Dendritic cell treated with granulocyte-macrophage colony-stimulating factor and Interleukin-4, amounts not matched to agents 40 ng/mL and 50 ng/mL, for 4 days (primary cell): ENCODE measurements at regions of chr16 and their contacts with region 1.

Region 1: DNA sequence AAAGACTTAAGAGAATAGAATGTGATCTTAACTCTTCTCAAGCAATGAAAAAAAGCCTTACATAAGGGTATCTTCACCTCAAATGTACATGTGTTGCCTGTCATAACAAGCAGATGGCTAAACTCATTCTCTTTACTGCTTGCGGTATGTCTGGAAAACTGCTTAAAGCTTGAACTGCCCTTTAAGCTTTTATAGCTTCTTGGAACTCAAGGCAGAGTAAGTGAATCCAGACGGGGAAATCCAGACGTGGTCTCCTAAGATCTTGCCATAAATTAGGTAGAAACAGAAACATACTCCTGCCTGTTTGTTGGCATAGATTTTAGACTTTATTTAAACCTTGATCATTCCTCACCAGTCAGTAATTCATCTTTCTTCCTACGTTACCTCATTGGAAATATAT is 19.6 kb downstream of the CLUAP1 start:
- H3K4me3 Mint-ChIP-seq: no peak overlapping the region
- H3K27ac Mint-ChIP-seq: no peak overlapping the region
- H3K4me1 Mint-ChIP-seq: peaks cover 10% of the 10 kb centered on the region
- H3K27me3 Mint-ChIP-seq: no peaks in the 10 kb centered on the region

Region 2: DNA sequence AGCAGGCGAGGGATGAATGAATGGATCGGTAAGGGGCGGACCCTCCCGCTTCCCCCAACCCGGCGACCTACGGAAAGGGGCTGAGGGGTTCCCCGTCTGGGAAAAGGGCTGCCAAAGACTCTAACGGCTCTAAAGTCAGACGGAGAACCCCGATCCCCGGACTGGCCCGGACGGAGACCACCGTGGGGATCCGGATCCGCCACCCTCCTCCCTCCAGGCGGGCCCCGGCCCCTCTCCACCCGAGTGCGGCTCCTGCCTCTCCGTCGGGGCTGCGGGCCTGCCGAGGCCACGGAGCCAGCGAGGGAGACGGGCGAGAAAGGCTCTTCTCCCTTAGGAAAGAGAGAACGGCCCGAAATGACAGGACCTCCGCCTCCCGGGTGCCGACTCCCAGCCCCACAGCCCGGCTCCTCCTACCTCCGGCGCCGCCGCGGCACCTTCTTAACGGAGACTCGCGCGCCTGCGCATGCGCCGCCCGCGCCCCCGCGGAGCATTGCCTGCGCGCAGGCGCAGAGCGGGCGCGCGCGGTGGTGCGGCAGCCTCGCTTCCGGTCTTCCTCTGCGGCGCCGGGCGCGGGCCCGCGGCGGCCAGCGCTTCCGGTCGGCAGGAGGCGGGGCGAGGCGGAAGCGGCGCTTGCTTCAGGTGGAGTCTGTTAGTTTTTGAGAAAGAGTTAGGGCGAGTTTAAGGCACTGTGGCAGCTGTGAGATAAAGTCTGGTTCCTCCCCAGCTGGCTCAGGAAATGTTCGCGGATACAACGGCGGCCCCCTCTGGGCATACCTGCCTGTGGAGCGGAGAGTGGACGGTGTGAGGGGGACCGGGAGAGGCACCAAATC is 90.9 kb after region 1 on chr16 and contains the start of gene SLX4:
- intact Hi-C with region 1: loop called (anchors 10 kb)
- H3K4me3 Mint-ChIP-seq: peak within 1 kb of the TSS; percentile 96
- H3K27ac Mint-ChIP-seq: peak within 1 kb of the TSS; percentile 85
- H3K4me1 Mint-ChIP-seq: peaks cover 52% of the 10 kb centered on the region
- H3K27me3 Mint-ChIP-seq: no peaks in the 10 kb centered on the region